Posterior vena cava (tissue), 2 donors: ENCODE measurements at regions of chr12 and their contacts with region 1.

Region 1: DNA sequence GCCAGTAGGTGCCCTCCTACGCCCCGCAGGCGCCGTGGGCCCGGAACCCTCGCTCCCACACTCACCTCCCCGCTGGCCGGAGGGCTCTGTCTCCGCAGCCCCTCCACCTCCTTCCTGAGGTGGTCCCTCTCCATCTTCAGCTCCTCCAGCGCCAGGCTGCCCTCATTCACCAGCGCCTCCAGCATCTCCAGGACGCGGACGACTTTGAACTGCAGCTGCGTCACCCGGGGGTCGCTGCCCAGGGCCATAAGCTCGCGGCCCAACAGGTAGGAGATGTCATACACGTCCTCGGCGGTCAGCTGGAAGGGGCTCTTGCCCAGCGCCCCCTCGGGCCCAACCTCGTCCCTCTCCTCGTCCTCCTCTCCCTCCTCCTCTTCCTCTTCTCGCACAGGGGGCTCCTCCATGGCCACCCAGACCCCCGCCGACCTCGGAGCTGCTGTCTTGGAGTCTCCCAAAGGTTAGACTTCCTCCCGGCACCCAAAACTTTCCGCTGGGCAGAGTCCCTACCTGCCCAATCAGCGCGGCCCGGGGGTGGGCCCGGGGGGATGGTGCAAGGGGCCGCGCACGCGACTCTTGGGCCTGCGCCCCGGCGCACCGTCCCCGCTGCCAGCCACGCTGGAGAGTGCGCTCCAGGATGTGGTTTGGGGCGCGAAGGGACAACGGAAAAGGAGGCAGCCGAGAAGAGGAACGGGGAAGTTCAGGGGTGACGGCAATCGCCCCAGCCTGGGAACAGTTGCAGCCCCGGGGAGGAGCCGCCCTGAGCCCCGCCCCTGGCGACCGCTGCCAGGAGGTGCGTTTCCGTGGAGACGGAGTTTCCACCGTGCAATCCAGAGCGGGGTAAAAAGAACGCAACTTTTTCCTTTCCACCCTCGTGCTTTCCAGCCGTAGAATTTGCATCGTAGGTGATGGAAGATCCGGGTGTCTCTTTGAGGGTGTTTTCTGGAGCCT is at the start of gene RILPL2:
- DNase-seq: peak; percentile 98
- total RNA-seq, gene RILPL2: 4.8 to 5.3 TPM

Region 2: GRCh38 chr12:123388177-123388947 is 47.9 kb before region 1 on chr12:
- intact Hi-C with region 1: loop called in 1 of 2 experiments (anchors 10 kb)
- DNase-seq: peak; percentile 91